A549 (cell line): ENCODE measurements at regions of chr20 and their contacts with region 1.

Region 1: GRCh38 chr20:49541733-49542513 is 26.0 kb downstream of the PTGIS start:
- DNase-seq: peak; percentile 81 to 87
- ATAC-seq: peak; percentile 73 to 87
- H3K4me3 ChIP-seq: no peak overlapping the region
- H3K27ac ChIP-seq: peak overlapping the region; percentile 48 to 61; a peak in 5 of 6 replicates
- H3K4me1 ChIP-seq: 0 out of 3 replicates have a peak, but pooled peaks cover 5% of the 10 kb centered on the region
- CTCF ChIP-seq: peak; percentile 98
- EP300 ChIP-seq: no peak
- POLR2A ChIP-seq: no peak
- RAD21 ChIP-seq: peak; percentile 98

Region 2: GRCh38 chr20:49559401-49560081 is 17.6 kb after region 1 on chr20:
- CTCF ChIA-PET with region 1: interaction called, 79 read pairs
- POLR2A ChIA-PET with region 1: no interaction called
- DNase-seq: no peak
- ATAC-seq: no peak
- H3K4me3 ChIP-seq: no peak overlapping the region
- H3K27ac ChIP-seq: no peak overlapping the region
- H3K4me1 ChIP-seq: peaks cover 19% of the 10 kb centered on the region
- CTCF ChIP-seq: no peak
- EP300 ChIP-seq: no peak
- POLR2A ChIP-seq: no peak
- RAD21 ChIP-seq: no peak

Region 3: DNA sequence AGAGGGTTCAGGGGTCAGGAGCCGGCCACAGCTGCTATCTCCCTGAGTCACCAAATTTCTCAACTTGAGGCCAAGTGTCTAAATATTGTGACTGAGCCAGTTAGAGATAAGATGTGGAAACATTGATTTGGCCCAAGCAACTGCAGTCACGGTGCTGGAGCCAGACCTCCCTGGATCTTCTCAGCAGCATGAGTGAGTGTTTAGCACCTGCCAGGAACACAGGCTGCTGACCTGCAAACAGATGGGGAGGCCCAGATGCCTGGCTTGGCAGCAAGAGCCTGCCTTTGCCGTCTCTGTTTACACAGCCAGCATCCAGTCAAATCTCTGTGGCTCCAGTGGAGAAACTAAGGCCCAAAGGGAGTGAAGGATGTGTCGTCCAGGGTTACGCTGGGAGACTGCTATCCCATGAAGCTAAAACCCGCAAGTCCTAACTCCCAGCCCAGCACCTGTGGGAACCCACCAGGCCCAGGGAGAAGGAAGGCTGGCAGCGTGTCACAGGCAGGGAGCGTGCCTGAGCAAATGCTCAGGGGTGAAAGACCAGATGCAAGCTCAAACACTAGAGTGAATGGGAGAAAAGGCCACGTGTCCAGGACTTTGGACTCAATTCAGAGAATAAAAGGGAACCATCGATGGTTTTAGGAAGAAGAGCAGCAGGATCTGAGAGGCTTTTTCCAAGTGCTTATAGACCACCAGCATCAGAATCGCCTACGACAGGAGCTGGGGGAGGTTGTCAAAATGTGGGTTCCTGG is 41.9 kb after region 1 on chr20:
- CTCF ChIA-PET with region 1: interaction called, 43 read pairs
- POLR2A ChIA-PET with region 1: no interaction called
- DNase-seq: peak; percentile 82 to 95
- ATAC-seq: peak; percentile 87 to 92
- H3K4me3 ChIP-seq: no peak overlapping the region
- H3K27ac ChIP-seq: peak overlapping the region; percentile 84 to 88
- H3K4me1 ChIP-seq: peaks cover 52% of the 10 kb centered on the region
- CTCF ChIP-seq: no peak
- EP300 ChIP-seq: peak; percentile 86 to 87; a peak in 4 of 5 replicates
- POLR2A ChIP-seq: no peak
- RAD21 ChIP-seq: peak in 1 of 2 experiments; percentile 22; a peak in 2 of 5 replicates

Region 4: GRCh38 chr20:49603209-49603627 is 61.3 kb after region 1 on chr20:
- CTCF ChIA-PET with region 1: interaction called, 546 read pairs
- POLR2A ChIA-PET with region 1: interaction called, 3 read pairs
- DNase-seq: peak in 1 of 2 experiments; percentile 69
- ATAC-seq: peak; percentile 67 to 79
- H3K4me3 ChIP-seq: no peak overlapping the region
- H3K27ac ChIP-seq: peak overlapping the region; percentile 69 to 75; a peak in 4 of 6 replicates
- H3K4me1 ChIP-seq: peaks cover 21% of the 10 kb centered on the region
- CTCF ChIP-seq: peak; percentile 39
- EP300 ChIP-seq: no peak
- POLR2A ChIP-seq: no peak
- RAD21 ChIP-seq: peak; percentile 35 to 55; a peak in 4 of 5 replicates

Region 5: DNA sequence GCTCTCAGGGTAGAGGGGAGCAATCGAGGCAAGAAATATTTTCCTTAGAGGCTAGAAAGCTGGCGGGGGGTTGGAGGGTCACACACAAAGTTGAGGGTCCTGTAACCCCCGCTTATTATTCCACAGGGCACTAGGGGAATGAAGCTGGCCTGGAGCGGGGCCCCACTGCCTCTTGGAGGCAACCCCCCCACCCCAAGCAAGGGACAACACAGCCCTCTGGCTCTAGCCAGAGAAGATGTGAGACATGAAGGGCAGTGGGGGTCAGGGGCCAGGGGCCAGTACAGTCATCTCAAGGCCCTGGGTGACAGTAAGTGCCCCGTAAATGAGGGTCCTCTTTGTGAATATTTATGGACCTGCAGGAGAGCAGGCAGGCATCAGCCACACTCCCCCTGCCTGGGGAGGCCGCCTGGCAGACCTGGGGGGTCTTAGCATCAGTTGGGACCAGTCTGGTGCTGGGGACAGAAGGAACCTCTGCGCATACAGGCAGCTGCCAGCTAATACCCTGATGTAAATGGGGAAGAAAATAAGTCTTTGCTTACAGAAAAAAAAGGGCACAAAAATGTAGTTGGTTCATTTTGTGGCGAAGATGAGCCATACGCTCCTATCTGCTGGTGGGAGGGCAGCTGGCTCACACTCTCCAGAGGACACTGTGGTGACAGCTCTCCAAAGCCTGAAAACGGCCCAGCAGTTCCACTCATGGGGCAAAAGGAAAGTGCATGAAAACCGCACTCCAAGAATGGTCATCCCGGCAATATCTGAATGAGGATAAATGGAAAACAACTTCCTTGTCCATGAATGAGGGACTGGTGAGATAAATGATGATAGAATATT is 351.5 kb after region 1 on chr20:
- CTCF ChIA-PET with region 1: interaction called, 50 read pairs
- POLR2A ChIA-PET with region 1: no interaction called
- DNase-seq: no peak
- ATAC-seq: no peak
- H3K4me3 ChIP-seq: no peak overlapping the region
- H3K27ac ChIP-seq: no peak overlapping the region
- H3K4me1 ChIP-seq: peaks cover 14% of the 10 kb centered on the region; the same call in 2 of the 3 replicates
- CTCF ChIP-seq: no peak
- EP300 ChIP-seq: no peak
- POLR2A ChIP-seq: no peak
- RAD21 ChIP-seq: no peak